CD4-positive, alpha-beta memory T cell (primary cell): ENCODE measurements at regions of chr12 and their contacts with region 1.

Region 1: DNA sequence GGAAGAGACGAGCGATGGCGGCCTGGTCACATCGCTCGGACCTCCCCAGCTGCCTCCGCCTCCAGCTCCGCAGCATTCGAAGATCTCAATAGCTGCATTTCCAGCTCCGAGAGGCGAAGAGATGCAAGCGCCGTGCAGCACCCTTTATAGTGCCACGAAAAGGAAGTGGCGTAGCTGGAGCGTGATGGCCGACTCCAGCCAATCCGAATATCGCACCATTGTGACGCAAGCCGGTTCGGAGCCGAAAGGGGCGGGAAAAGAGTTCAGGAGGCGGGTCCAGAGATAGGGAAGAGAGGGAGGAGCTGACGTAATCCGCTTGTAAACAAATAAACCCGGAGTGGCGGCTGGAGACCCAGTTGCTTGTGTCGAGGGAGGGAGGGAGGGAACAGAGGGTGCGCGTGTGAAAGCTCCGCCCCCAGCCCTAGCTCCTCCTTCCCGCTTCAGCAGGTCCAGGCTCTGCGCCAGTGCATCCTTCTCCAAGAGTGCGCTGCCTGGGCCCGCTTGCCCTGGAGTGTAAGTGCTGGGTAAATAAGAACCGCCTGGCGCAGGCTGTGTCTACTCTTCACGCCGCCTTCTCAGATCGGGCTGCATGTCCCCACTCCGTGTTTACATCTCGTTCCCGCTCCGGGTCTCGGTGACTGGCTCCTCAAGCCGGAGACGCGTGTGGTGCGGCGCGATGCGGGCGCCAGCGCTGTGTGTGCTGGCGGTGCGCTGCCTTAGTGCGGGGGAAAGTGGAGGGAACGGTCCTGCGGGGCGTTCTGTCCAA is at the start of gene BTG1:
- DNase-seq: peak; percentile 99 to 100 (median 100)
- H3K4me3 ChIP-seq: peak within 1 kb of the TSS; percentile 89 to 96
- H3K4me3 Mint-ChIP-seq: peak within 1 kb of the TSS; percentile 92 to 100 (median 100)
- H3K27ac ChIP-seq: peak within 1 kb of the TSS; percentile 86
- H3K27ac Mint-ChIP-seq: peak within 1 kb of the TSS; percentile 95 to 100 (median 100)
- H3K4me1 ChIP-seq: peaks cover 23% of the 10 kb centered on the region
- H3K4me1 Mint-ChIP-seq: peaks cover 9 to 37% (median 21%) of the 10 kb centered on the region in 4 donors
- H3K27me3 ChIP-seq: no peaks in the 10 kb centered on the region
- H3K27me3 Mint-ChIP-seq: no peaks in the 10 kb centered on the region
- total RNA-seq, gene BTG1: 431 to 469 TPM

Region 2: GRCh38 chr12:91718326-91718725 is 427.6 kb before region 1 on chr12:
- CTCF ChIA-PET with region 1: no interaction called
- POLR2A ChIA-PET with region 1: no interaction called
- intact Hi-C with region 1: no loop called
- DNase-seq: no peak
- H3K4me3 ChIP-seq: no peak overlapping the region
- H3K4me3 Mint-ChIP-seq: no peak overlapping the region
- H3K27ac ChIP-seq: no peak overlapping the region
- H3K27ac Mint-ChIP-seq: no peak overlapping the region
- H3K4me1 ChIP-seq: no peaks in the 10 kb centered on the region
- H3K4me1 Mint-ChIP-seq: no peaks in the 10 kb centered on the region
- H3K27me3 ChIP-seq: no peaks in the 10 kb centered on the region
- H3K27me3 Mint-ChIP-seq: no peaks in the 10 kb centered on the region

Region 3: DNA sequence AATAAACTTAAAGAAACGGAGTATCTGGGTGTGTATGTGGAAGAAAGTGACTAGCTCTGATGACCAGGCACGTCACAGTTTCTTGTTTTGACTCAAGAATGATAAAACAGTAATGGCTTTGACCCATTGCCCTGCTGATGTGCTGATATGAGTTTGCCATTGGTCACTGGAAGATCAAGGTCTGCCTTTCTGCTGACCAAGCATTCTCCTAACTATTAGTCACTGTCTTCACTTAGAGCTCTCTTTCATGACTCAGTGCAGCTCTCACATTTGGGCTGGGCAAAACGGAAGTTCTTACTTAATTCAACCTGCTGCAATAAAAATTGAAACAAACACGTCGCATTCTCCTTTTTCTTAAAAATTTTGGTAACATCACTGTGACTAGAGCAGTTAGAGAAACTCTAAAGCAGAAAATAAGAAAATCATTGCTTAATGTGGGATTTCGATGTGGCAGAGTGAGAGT is 366.9 kb before region 1 on chr12:
- CTCF ChIA-PET with region 1: interaction called, 3 read pairs
- POLR2A ChIA-PET with region 1: interaction called, 37 read pairs
- intact Hi-C with region 1: no loop called
- DNase-seq: peak; percentile 23 to 71 (median 32)
- H3K4me3 ChIP-seq: peak overlapping the region; percentile 7 to 14
- H3K4me3 Mint-ChIP-seq: peak overlapping the region; percentile 72 to 88 (median 82)
- H3K27ac ChIP-seq: peak overlapping the region; percentile 49
- H3K27ac Mint-ChIP-seq: peak overlapping the region; percentile 70 to 95 (median 90)
- H3K4me1 ChIP-seq: peaks cover 35% of the 10 kb centered on the region
- H3K4me1 Mint-ChIP-seq: peaks cover 24 to 31% (median 27%) of the 10 kb centered on the region in 4 donors
- H3K27me3 ChIP-seq: no peaks in the 10 kb centered on the region
- H3K27me3 Mint-ChIP-seq: no peaks in the 10 kb centered on the region

Region 4: DNA sequence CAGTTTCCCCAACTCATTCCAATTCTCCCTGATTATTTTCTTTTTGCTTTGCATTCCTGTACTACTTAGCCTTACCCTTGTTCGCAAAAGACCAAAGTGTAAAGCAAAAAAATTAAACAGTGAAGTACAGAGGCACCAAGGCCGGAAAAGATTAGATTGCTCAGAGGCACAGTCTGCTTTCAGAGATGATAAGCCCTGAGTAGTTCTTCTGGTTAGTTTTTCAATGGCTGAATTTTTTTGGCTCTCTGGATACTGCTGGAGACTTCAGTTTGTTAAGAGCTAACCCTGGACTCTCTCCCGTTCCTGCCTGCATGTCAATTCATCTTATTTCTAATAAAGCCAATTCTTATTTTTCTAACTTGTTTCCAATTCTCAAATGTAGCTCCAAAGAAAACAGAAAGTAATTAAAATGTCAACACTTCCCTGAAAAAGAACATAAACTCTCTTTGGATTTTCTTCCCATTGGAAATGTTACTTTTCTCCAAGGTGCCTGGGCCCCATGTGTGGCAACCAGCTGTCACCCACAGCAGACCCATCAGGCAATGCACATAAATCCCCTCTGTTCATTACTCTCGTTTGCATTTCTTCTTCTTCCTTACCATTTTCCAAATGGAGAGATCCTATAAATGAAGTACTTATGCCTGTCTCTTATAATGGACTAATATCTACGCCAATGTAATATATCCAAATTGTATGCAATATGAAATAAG is 143.1 kb before region 1 on chr12:
- CTCF ChIA-PET with region 1: interaction called, 6 read pairs
- POLR2A ChIA-PET with region 1: interaction called, 84 read pairs
- intact Hi-C with region 1: no loop called
- DNase-seq: no peak
- H3K4me3 ChIP-seq: no peak overlapping the region
- H3K4me3 Mint-ChIP-seq: peak overlapping the region in 1 of 8 donors; percentile 8
- H3K27ac ChIP-seq: no peak overlapping the region
- H3K27ac Mint-ChIP-seq: peak overlapping the region in 6 of 7 donors; percentile 2 to 90 (median 44)
- H3K4me1 ChIP-seq: peaks cover 19% of the 10 kb centered on the region
- H3K4me1 Mint-ChIP-seq: peaks cover 30 to 58% (median 37%) of the 10 kb centered on the region in 4 donors
- H3K27me3 ChIP-seq: no peaks in the 10 kb centered on the region
- H3K27me3 Mint-ChIP-seq: no peaks in the 10 kb centered on the region

Region 5: GRCh38 chr12:92059976-92060375 is 85.9 kb before region 1 on chr12:
- CTCF ChIA-PET with region 1: no interaction called
- POLR2A ChIA-PET with region 1: interaction called, 113 read pairs
- intact Hi-C with region 1: loop called (anchors 5 kb)
- DNase-seq: no peak
- H3K4me3 ChIP-seq: no peak overlapping the region
- H3K4me3 Mint-ChIP-seq: peak overlapping the region in 1 of 8 donors; percentile 75
- H3K27ac ChIP-seq: no peak overlapping the region
- H3K27ac Mint-ChIP-seq: peak overlapping the region in 4 of 7 donors; percentile 10 to 93 (median 30)
- H3K4me1 ChIP-seq: peaks cover 53% of the 10 kb centered on the region
- H3K4me1 Mint-ChIP-seq: peaks cover 44 to 88% (median 68%) of the 10 kb centered on the region in 4 donors
- H3K27me3 ChIP-seq: no peaks in the 10 kb centered on the region
- H3K27me3 Mint-ChIP-seq: no peaks in the 10 kb centered on the region

Region 6: GRCh38 chr12:92208613-92209121 is 62.8 kb after region 1 on chr12:
- CTCF ChIA-PET with region 1: interaction called, 7 read pairs
- POLR2A ChIA-PET with region 1: interaction called, 191 read pairs
- intact Hi-C with region 1: loop called (anchors 1 kb)
- DNase-seq: peak; percentile 61 to 78 (median 66)
- H3K4me3 ChIP-seq: peak overlapping the region in 1 of 2 donors; percentile 30
- H3K4me3 Mint-ChIP-seq: peak overlapping the region; percentile 63 to 88 (median 81)
- H3K27ac ChIP-seq: peak overlapping the region; percentile 19
- H3K27ac Mint-ChIP-seq: peak overlapping the region; percentile 77 to 95 (median 86)
- H3K4me1 ChIP-seq: peaks cover 31% of the 10 kb centered on the region
- H3K4me1 Mint-ChIP-seq: peaks cover 26 to 42% (median 35%) of the 10 kb centered on the region in 4 donors
- H3K27me3 ChIP-seq: no peaks in the 10 kb centered on the region
- H3K27me3 Mint-ChIP-seq: no peaks in the 10 kb centered on the region

Region 7: DNA sequence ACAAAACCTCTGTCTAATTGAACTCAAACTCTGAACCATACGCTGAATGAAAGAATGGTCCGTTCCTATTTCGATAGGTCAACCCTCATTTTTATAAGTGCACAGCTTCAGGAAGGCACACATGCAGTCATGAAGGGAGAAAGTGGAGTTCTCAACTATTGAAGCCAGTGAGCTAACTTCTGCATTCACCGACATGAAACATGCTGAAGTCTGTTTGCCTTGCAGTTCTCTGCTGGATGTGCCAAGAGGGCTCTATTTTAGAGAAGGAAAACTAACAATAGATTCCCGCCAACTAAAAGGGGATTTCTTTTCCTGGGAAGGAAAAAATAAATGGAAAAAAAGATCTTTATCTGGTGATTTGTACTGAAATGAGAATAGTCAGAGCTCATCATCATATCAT is 365.9 kb after region 1 on chr12:
- CTCF ChIA-PET with region 1: no interaction called
- POLR2A ChIA-PET with region 1: interaction called, 109 read pairs
- intact Hi-C with region 1: loop called (anchors 5 kb)
- DNase-seq: no peak
- H3K4me3 ChIP-seq: no peak overlapping the region
- H3K4me3 Mint-ChIP-seq: no peak overlapping the region
- H3K27ac ChIP-seq: no peak overlapping the region
- H3K27ac Mint-ChIP-seq: no peak overlapping the region
- H3K4me1 ChIP-seq: no peaks in the 10 kb centered on the region
- H3K4me1 Mint-ChIP-seq: peaks cover 0 to 7% (median 0%) of the 10 kb centered on the region in 4 donors
- H3K27me3 ChIP-seq: no peaks in the 10 kb centered on the region
- H3K27me3 Mint-ChIP-seq: no peaks in the 10 kb centered on the region